B cell (primary cell): ENCODE measurements at regions of chr1 and their contacts with region 1.

Region 1: DNA sequence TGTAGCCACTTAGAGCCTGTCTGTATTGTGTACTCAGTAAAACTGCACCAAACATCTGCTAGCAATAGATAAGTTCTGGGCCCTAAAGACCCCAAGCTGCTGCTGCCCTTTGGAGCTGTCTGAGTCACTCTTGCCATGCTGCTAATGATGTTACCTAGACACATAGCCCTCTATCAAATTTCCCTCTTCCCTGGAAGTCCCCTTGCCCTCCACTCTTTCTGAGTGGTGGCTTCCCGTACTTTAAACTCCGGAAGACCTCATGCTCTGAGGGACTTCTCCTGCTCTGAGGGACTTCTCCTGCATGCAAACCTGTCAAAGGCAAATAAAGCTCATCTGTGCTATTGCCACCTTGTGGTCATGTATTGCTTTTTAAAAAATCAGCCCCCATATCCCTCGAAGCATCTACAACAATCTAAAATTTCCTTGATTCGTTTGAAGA is 34.0 kb downstream of the FH start:
- DNase-seq: peak; percentile 29
- ATAC-seq: no peak
- H3K4me3 ChIP-seq: no peak overlapping the region
- H3K4me3 Mint-ChIP-seq: no peak overlapping the region
- H3K27ac ChIP-seq: no peak overlapping the region
- H3K27ac Mint-ChIP-seq: no peak overlapping the region
- H3K4me1 ChIP-seq: no peaks in the 10 kb centered on the region
- H3K4me1 Mint-ChIP-seq: peaks cover 2% of the 10 kb centered on the region
- H3K27me3 ChIP-seq: no peaks in the 10 kb centered on the region
- H3K27me3 Mint-ChIP-seq: no peaks in the 10 kb centered on the region
- CTCF ChIP-seq: peak; percentile 41

Region 2: GRCh38 chr1:240732390-240732789 is 753.2 kb before region 1 on chr1:
- CTCF ChIA-PET with region 1: no interaction called
- POLR2A ChIA-PET with region 1: no interaction called
- intact Hi-C with region 1: loop called (anchors 5 kb)
- DNase-seq: peak; percentile 35
- ATAC-seq: no peak
- H3K4me3 ChIP-seq: no peak overlapping the region
- H3K4me3 Mint-ChIP-seq: no peak overlapping the region
- H3K27ac ChIP-seq: no peak overlapping the region
- H3K27ac Mint-ChIP-seq: no peak overlapping the region
- H3K4me1 ChIP-seq: no peaks in the 10 kb centered on the region
- H3K4me1 Mint-ChIP-seq: no peaks in the 10 kb centered on the region
- H3K27me3 ChIP-seq: no peaks in the 10 kb centered on the region
- H3K27me3 Mint-ChIP-seq: no peaks in the 10 kb centered on the region
- CTCF ChIP-seq: peak; percentile 62

Region 3: DNA sequence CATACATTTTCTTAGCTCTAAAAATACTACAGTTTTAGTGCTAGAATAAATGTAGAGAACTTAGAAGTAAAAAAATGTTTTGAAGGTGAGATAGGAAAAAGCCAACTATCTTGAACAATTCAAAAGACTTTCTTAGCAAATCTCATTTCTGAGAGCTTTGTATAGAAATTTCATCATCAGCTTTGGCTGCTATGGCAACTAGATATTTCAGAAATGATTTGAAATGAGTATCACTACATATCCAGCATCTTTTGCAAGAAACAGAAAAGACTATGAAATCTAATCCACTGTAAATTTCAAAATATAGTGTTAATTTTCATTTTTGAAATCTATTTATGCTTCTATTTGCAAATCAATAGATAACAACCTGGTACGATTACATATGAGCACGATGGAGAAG is 186.2 kb before region 1 on chr1:
- CTCF ChIA-PET with region 1: no interaction called
- POLR2A ChIA-PET with region 1: no interaction called
- intact Hi-C with region 1: no loop called
- DNase-seq: no peak
- ATAC-seq: no peak
- H3K4me3 ChIP-seq: no peak overlapping the region
- H3K4me3 Mint-ChIP-seq: no peak overlapping the region
- H3K27ac ChIP-seq: no peak overlapping the region
- H3K27ac Mint-ChIP-seq: no peak overlapping the region
- H3K4me1 ChIP-seq: no peaks in the 10 kb centered on the region
- H3K4me1 Mint-ChIP-seq: no peaks in the 10 kb centered on the region
- H3K27me3 ChIP-seq: no peaks in the 10 kb centered on the region
- H3K27me3 Mint-ChIP-seq: no peaks in the 10 kb centered on the region
- CTCF ChIP-seq: no peak